Astrocyte of the cerebellum (primary cell): ENCODE measurements at regions of chr9 and their contacts with region 1.

Region 1: DNA sequence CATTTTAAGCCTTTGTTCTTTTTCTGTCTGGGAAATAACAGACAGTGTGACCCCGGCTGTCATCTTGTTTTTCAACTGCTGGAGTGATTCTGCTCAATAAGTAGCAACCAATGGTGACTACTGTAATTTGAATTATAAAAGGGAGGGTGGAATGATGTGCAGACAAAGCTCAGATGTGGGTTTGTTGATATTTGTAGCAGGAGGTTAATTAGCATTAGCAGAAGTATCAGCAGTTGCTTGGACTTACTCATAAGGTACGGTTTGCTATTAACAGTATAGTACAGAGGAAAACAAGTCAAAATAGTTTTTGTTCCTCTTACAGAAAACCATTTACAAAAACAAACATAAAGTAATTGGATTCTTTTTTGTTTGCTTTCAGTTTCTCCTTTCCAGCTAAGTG is 140.4 kb downstream of the TUSC1 start:
- DNase-seq: no peak
- H3K4me3 ChIP-seq: no peak overlapping the region
- CTCF ChIP-seq: no peak

Region 2: GRCh38 chr9:25442526-25442925 is 95.3 kb before region 1 on chr9:
- in situ Hi-C with region 1: no loop called
- DNase-seq: no peak
- H3K4me3 ChIP-seq: no peak overlapping the region
- CTCF ChIP-seq: no peak

Region 3: GRCh38 chr9:25602400-25603046 is 64.7 kb after region 1 on chr9:
- in situ Hi-C with region 1: no loop called
- DNase-seq: no peak
- H3K4me3 ChIP-seq: no peak overlapping the region
- CTCF ChIP-seq: no peak

Region 4: DNA sequence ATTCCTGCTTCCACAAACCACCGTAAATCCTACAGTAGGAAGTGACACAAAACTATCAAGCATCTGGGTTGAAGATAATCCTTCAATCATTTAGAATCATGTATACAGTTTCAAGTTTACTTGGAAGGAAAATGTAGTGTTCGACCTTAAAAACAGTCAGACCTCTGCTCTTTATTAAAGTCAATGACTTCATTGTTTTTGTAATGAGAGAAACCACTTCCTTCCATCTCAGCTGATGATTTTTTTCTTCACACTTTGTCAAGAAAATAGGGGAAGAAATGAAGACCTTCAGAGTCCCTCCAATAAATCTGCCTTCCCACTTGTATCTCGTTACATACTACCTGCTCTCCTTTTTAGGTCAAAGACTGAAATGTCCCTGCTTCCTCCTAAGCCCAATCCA is 110.3 kb after region 1 on chr9:
- in situ Hi-C with region 1: loop called (anchors 25 kb)
- DNase-seq: no peak
- H3K4me3 ChIP-seq: no peak overlapping the region
- CTCF ChIP-seq: no peak